ENCODE measurements at regions of chr19 and their contacts with region 1.

Region 1: GRCh38 chr19:3557461-3558248 is at the start of gene MFSD12:
- DNase-seq: peak; percentile 87 to 97 (median 94)
- ATAC-seq: peak; percentile 77
- H3K4me3 ChIP-seq: peak within 1 kb of the TSS; percentile 84
- H3K4me3 Mint-ChIP-seq: peak within 1 kb of the TSS; percentile 93
- H3K27ac ChIP-seq: peak within 1 kb of the TSS; percentile 45 to 71
- H3K27ac Mint-ChIP-seq: peak within 1 kb of the TSS; percentile 93
- H3K4me1 ChIP-seq: peaks cover 54% of the 10 kb centered on the region
- H3K4me1 Mint-ChIP-seq: peaks cover 33% of the 10 kb centered on the region
- H3K27me3 ChIP-seq: no peaks in the 10 kb centered on the region
- H3K27me3 Mint-ChIP-seq: no peaks in the 10 kb centered on the region
- CTCF ChIP-seq: no peak
- total RNA-seq, gene MFSD12: 62.5 to 65.0 TPM

Region 2: DNA sequence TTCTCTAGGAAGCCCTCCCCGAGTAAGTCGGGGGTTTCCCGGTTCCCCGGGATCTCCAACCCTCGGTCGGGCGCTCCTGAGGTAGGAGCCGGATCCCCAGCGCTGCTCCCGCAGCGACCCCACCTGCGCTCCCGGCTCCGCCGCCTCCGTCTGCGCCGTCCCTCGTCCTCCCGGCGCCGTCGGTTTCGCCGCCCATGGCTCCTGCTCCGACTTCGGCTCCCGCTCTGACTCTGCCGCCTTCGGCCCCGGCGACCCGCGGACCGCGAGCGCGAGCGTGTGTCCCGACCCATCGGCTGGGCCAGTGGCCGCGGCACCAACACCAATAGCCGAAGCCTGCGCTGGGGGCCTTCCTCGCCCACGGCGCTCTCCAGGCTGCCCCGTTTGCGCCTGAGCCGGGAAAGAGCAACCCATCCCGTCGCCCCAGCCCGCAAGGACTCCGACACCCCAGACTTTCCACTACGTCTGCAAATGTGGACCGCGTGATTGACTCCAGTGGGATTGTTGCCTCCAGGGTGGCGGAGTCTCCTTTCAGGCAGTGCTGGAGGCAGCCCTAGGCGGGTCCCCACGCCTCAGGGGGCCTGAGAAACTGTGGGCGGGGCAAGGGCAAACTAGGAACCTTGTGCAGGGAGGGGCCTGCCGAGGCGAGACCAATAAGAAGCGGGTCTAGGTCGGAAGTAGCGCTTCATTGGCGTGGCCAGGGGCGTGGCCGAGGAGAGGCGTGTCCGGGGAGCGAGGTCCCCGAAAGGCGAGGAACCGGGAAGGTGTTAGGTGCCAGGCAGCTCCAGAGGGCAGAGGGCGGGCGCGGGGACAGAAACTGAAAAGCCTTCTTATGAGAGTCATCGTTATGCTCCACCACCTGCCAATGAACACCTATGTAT is 69.1 kb after region 1 on chr19 and contains the start of gene CACTIN:
- CTCF ChIA-PET with region 1: no interaction called
- POLR2A ChIA-PET with region 1: interaction called, 3 read pairs
- intact Hi-C with region 1: loop called (anchors 1 to 2 kb)
- DNase-seq: peak; percentile 97 to 99 (median 98)
- ATAC-seq: peak; percentile 97
- H3K4me3 ChIP-seq: peak within 1 kb of the TSS; percentile 85
- H3K4me3 Mint-ChIP-seq: peak within 1 kb of the TSS; percentile 92
- H3K27ac ChIP-seq: peak within 1 kb of the TSS; percentile 83 to 98
- H3K27ac Mint-ChIP-seq: peak within 1 kb of the TSS; percentile 94
- H3K4me1 ChIP-seq: peaks cover 35% of the 10 kb centered on the region
- H3K4me1 Mint-ChIP-seq: peaks cover 21% of the 10 kb centered on the region
- H3K27me3 ChIP-seq: no peaks in the 10 kb centered on the region
- H3K27me3 Mint-ChIP-seq: no peaks in the 10 kb centered on the region
- CTCF ChIP-seq: no peak
- total RNA-seq, gene CACTIN: 25.8 to 25.9 TPM